K562 (cell line): ENCODE measurements at regions of chr7 and their contacts with region 1.

Region 1: DNA sequence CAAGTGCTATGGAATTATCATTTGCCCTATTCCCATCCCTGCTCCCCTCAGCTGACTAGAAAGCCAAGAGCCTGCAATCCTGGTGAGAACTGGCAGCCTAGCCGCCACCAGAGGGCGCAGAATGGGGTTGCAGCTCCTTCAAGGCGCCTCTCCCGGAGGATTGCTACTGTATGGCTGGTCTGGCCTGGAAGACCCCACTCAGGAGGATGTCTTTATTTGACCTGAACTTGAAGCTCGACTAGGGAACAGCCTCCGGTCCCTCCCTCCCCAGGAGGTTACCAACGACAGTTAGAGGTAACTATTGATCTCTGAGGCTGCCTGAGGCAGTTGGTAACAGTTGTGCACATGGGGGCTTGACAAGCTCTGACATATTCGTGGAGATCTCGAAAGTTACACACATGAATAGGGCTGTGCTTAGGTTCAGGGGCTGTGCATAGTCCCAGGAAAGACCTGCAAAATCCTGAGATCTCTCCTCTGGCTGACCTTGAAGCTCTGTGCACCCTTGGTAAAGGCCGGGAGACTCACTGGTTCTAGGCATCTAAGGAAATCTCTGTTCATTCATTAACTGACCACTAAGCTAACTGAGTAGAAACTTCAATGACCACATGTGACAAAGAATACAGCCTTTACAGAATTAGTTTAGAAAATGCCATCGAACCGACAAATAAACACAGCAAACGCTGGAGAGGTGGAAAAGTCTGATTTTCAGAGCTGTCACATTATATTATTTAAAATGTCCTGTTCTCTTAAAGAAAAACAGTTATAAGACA is 65.7 kb downstream of the TSPAN12 start:
- DNase-seq: peak; percentile 65 to 90 (median 74)
- ATAC-seq: peak; percentile 99
- H3K4me3 ChIP-seq: no peak overlapping the region
- H3K27ac ChIP-seq: no peak overlapping the region
- H3K4me1 ChIP-seq: no peaks in the 10 kb centered on the region; a peak in 1 of 5 replicates
- H3K27me3 ChIP-seq: peaks cover 0 to 8% of the 10 kb centered on the region in 2 experiments; a peak in 1 of 5 replicates
- CTCF ChIP-seq: peak; percentile 94 to 99 (median 96)
- EP300 ChIP-seq: no peak
- POLR2A ChIP-seq: no peak
- RAD21 ChIP-seq: peak; percentile 77 to 92

Region 2: DNA sequence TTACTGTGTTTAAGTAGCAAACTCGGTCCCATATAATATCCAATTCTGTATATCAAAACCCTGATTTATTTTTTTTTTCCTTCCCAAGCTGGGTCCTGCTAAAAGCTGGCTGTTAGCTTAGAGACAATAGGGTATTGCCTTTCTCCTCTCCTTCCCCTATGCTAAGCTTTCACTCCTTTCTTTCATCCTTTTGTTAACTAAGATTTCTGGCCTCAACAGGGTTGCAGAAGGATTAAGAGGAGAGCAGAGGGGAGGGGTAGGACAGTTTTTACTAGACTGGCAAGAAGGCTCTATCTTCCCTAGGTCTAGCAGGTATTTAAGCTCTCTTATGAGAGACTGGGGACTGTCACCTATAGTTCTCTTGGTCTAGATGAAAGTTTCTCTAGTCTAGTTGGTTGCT is 290.1 kb before region 1 on chr7:
- CTCF ChIA-PET with region 1: no interaction called
- POLR2A ChIA-PET with region 1: no interaction called
- in situ Hi-C with region 1: no loop called
- intact Hi-C with region 1: no loop called
- DNase-seq: no peak
- ATAC-seq: no peak
- H3K4me3 ChIP-seq: no peak overlapping the region
- H3K27ac ChIP-seq: no peak overlapping the region
- H3K4me1 ChIP-seq: no peaks in the 10 kb centered on the region
- H3K27me3 ChIP-seq: no peaks in the 10 kb centered on the region
- CTCF ChIP-seq: no peak
- EP300 ChIP-seq: no peak
- POLR2A ChIP-seq: no peak
- RAD21 ChIP-seq: no peak

Region 3: GRCh38 chr7:120996333-120996987 is 204.2 kb after region 1 on chr7:
- CTCF ChIA-PET with region 1: no interaction called
- POLR2A ChIA-PET with region 1: no interaction called
- in situ Hi-C with region 1: no loop called
- intact Hi-C with region 1: no loop called
- DNase-seq: peak in 2 of 4 experiments; percentile 64 to 90
- ATAC-seq: peak; percentile 13
- H3K4me3 ChIP-seq: no peak overlapping the region; the same call in 1 of the 2 replicates
- H3K27ac ChIP-seq: peak overlapping the region; percentile 30
- H3K4me1 ChIP-seq: peaks cover 15 to 44% of the 10 kb centered on the region in 2 experiments
- H3K27me3 ChIP-seq: no peaks in the 10 kb centered on the region
- CTCF ChIP-seq: 0 out of 6 replicates have a peak, but pooled peaks of 1 of the 3 experiments have one; percentile 0
- EP300 ChIP-seq: no peak
- POLR2A ChIP-seq: no peak
- RAD21 ChIP-seq: no peak

Region 4: DNA sequence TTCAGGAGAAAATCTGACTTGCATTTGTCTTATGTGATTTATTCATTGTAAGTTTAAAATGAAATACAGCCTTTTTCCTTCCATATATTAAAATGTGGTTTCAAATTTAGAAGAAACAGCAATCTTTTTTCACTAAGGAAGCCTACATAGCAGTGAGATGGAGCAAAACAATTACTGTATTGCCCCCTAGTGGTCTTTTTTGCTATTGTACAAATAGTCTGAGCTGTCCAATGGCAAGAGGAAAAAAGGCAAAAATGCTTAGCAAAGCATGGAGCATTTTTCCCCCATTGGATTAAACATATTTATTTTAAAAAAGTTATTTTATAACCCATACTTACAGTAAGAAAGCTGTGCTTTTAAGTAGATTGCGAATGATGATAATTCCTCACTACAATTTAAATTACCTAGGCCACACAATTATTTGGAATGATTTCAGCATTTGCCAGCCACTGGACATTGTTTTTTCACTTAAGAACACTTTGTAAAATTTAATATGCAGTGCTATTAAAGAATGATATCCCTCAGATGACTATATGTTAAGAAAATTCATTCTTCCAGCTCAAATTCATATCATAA is 315.7 kb after region 1 on chr7:
- CTCF ChIA-PET with region 1: interaction called, 24 read pairs
- POLR2A ChIA-PET with region 1: no interaction called
- in situ Hi-C with region 1: loop called (anchors 5 kb)
- intact Hi-C with region 1: loop called (anchors 5 kb)
- DNase-seq: peak; percentile 67 to 82 (median 79)
- ATAC-seq: peak; percentile 99
- H3K4me3 ChIP-seq: no peak overlapping the region
- H3K27ac ChIP-seq: no peak overlapping the region
- H3K4me1 ChIP-seq: no peaks in the 10 kb centered on the region
- H3K27me3 ChIP-seq: no peaks in the 10 kb centered on the region
- CTCF ChIP-seq: peak; percentile 61 to 95 (median 83)
- EP300 ChIP-seq: no peak
- POLR2A ChIP-seq: no peak
- RAD21 ChIP-seq: peak; percentile 78 to 89

Region 5: DNA sequence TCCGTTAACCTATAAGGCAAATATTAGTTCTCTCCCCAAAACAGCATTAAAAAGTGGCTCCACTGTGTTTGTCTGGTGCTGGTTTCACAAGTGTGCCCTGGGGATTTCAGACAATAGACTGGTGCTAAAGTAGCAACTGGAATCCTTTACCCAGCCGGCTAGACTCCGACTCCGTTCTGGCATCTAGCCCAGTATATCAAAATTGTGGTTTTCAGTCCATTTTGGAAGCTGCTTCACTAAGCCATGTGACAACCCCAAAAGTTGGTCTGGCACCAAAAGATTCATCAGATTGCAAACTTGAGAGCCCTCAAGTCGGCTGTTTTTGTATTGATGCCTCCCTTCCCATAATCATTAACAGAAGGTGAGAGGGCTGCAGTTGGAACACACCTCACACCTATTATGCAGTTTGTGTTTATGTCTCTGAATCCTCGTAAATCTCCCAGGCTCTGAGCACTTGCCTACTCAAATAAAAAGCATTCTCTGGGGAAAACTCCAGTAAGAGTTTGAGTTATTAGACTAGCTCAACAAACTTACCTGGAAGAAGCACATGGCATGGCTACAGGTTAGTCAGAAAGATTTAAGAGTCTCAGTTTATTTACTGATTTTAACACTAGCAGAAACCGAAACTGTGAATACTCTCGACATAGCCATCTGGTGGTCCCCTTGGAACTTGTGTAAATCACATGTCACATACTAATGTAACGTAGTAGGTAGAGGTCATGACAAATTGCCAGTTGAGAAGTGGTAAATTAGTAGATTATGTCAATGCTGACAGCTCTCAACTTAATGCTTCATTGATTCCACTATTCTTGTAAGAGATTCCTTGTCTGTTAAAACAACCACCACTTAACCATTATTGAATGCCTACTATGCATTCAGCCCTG is 521.8 kb after region 1 on chr7:
- CTCF ChIA-PET with region 1: no interaction called
- POLR2A ChIA-PET with region 1: no interaction called
- in situ Hi-C with region 1: loop called (anchors 10 kb)
- intact Hi-C with region 1: no loop called
- DNase-seq: no peak
- ATAC-seq: peak; percentile 51
- H3K4me3 ChIP-seq: no peak overlapping the region
- H3K27ac ChIP-seq: no peak overlapping the region
- H3K4me1 ChIP-seq: no peaks in the 10 kb centered on the region
- H3K27me3 ChIP-seq: peaks cover 9 to 13% of the 10 kb centered on the region in 2 experiments
- CTCF ChIP-seq: no peak
- EP300 ChIP-seq: no peak
- POLR2A ChIP-seq: no peak
- RAD21 ChIP-seq: peak in 1 of 2 experiments; percentile 19; a peak in 1 of 4 replicates

Region 6: DNA sequence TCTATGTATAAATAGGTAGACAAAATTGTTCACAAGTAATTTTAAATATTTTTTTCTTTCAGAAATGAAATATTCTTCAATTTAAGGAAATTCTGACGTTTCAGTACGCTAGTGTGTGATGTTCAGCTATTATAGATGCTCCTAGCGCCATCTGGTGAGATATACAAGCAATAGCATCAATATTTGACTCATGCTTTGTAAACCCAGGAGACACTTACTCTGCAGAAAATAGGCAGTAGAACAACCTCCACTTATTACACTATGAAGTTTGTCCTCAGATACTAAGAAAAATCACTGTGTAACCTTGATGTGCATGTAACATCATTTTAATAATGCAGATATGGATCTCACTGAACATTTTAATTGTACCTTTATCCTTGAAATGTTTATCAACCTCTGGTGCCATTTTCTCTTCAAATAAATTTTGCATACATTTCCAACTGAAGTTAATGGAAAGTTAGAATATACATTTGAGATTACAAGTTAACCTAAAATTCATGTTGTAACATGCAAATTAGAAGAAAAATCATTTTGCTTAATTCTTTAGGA is 755.3 kb after region 1 on chr7:
- CTCF ChIA-PET with region 1: no interaction called
- POLR2A ChIA-PET with region 1: no interaction called
- in situ Hi-C with region 1: loop called (anchors 25 kb)
- intact Hi-C with region 1: loop called (anchors 5 kb)
- DNase-seq: peak; percentile 62 to 77 (median 72)
- ATAC-seq: peak; percentile 95
- H3K4me3 ChIP-seq: no peak overlapping the region
- H3K27ac ChIP-seq: no peak overlapping the region
- H3K4me1 ChIP-seq: no peaks in the 10 kb centered on the region
- H3K27me3 ChIP-seq: no peaks in the 10 kb centered on the region
- CTCF ChIP-seq: peak; percentile 70 to 95 (median 77)
- EP300 ChIP-seq: no peak
- POLR2A ChIP-seq: no peak
- RAD21 ChIP-seq: peak; percentile 99 to 100